ENCODE measurements at regions of chr1 and their contacts with region 1.

Region 1: GRCh38 chr1:159161001-159161718 is 10.3 kb upstream of the CADM3 start:
- DNase-seq: peak; percentile 66 to 84 (median 79)
- ATAC-seq: peak; percentile 96 to 97
- H3K4me3 ChIP-seq: no peak overlapping the region
- H3K27ac ChIP-seq: no peak overlapping the region
- H3K4me1 ChIP-seq: peaks cover 2% of the 10 kb centered on the region
- H3K27me3 ChIP-seq: no peaks in the 10 kb centered on the region

Region 2: GRCh38 chr1:159197561-159198557 is 36.7 kb after region 1 on chr1:
- intact Hi-C with region 1: loop called (anchors 5 kb)
- DNase-seq: peak; percentile 65 to 80 (median 74)
- ATAC-seq: peak; percentile 71 to 80
- H3K4me3 ChIP-seq: no peak overlapping the region
- H3K27ac ChIP-seq: no peak overlapping the region
- H3K4me1 ChIP-seq: no peaks in the 10 kb centered on the region
- H3K27me3 ChIP-seq: no peaks in the 10 kb centered on the region

Region 3: DNA sequence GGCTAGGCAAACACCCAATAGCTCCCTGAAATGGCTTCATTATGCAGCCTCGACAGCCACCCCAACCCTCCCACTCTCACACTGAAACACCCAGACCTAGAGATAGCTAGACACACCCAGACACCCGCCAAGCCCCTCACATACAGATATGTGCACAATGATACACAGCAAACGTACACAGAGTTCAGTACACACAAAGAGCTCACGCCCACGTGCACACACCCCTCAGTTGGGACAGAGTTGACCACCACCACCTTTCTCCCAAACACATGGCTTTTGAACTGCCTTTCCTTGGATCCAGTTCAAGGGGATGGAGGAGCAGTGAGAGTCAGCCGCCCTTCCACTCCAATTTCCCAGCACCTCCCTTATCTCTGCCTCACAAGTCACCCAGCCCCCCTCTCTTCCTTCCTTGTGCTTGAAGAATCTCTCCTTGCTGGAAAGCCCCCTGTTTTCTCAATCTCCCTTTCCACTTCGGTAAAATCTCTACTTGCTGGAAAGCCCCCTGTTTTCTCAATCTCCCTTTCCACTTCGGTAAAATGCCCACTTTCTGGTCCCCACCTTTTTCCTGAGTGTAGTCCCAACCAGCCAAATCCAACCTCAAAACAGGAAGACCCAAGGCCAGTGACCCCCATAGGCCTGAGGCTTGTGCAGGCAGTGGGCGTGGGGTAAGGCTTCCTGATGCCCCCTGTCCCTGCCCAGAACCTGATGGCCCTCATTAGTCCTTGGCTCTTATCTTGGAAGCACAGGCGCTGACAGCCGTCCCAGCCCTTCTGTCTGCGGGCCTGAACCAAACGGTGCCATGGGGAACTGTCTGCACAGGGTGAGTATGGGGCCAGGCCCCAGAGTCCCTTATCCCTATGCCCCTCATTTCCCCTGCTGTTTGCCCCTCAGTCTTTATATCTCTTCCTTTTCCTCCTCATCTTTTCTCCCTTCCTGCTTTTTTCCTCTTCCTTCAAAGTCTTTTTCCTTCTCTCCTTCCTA is 43.3 kb after region 1 on chr1 and contains the start of gene ACKR1:
- intact Hi-C with region 1: loop called (anchors 5 kb)
- DNase-seq: no peak
- ATAC-seq: peak in 1 of 2 donors; percentile 41
- H3K4me3 ChIP-seq: no peak within 1 kb of the TSS
- H3K27ac ChIP-seq: no peak within 1 kb of the TSS
- H3K4me1 ChIP-seq: no peaks in the 10 kb centered on the region
- H3K27me3 ChIP-seq: no peaks in the 10 kb centered on the region
- total RNA-seq, gene ACKR1: 2.7 to 17.9 (median 4.0) TPM

Region 4: DNA sequence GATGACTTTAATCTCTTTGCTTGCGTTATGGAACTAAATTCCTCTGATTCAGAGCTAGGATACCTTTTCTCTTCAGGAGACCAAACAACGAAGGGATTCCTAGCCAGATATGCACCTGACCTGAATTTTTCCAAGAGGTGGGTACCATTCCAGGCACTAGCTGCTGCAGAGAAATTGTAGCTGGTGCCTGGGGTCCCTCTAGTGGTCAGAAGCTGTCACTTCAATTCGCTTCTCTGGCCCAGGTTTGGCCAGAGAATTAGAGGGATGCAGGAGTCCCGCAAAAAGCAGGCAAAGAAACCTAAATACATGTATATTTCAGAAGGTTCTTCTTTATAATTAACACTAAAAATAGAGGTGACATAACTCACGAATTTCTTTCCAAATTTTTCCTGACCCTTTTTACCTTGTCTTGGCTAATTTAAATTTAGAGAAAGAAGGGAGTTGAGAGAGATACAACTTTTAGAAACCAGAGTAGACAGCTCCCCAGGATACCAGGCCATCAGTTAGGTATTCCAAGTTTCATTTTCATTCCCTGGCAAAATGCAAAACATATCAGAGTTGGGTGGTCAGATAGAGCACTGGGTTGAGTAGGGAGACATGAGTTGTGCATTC is 53.1 kb after region 1 on chr1:
- intact Hi-C with region 1: loop called in 2 of 4 experiments (anchors 5 kb)
- DNase-seq: no peak
- ATAC-seq: peak; percentile 63 to 69
- H3K4me3 ChIP-seq: no peak overlapping the region
- H3K27ac ChIP-seq: no peak overlapping the region
- H3K4me1 ChIP-seq: no peaks in the 10 kb centered on the region
- H3K27me3 ChIP-seq: peaks cover 3% of the 10 kb centered on the region